ENCODE measurements at regions of chr9 and their contacts with region 1.

Region 1: DNA sequence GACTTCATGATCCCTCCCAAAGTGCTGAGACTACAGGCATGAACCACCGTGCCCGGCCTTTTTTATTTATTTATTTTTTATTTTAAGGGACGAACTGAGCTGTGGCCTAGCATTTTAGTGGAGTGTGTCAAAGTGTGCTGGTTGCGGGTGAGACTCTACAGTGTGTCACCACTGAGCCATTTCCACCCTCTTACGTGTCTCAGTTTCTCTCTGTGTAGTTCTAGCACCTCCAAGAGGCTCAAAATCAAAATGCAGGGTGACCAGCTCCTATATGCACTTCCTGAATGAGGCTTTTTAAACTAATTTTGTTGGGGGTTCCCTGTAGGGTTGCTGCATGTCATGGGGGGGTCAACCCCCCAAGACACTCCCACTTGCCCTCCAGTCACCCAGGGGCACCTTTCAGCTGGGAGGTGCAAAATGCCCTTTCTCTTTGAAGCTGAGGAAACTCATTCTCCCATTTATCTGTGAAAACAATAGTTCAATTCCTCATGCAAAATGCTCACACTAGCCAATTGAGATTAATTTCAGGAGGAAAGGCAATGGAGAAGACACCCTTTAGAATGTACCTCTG is 69.3 kb downstream of the COL15A1 start:
- DNase-seq: peak in 1 of 2 donors; percentile 54
- ATAC-seq: peak; percentile 88 to 97 (median 95)
- H3K4me3 ChIP-seq: no peak overlapping the region
- H3K4me3 Mint-ChIP-seq: peak overlapping the region; percentile 71
- H3K27ac ChIP-seq: peak overlapping the region; percentile 79
- H3K27ac Mint-ChIP-seq: peak overlapping the region; percentile 86 to 94
- H3K4me1 ChIP-seq: peaks cover 7% of the 10 kb centered on the region
- H3K4me1 Mint-ChIP-seq: peaks cover 33 to 36% of the 10 kb centered on the region in 2 donors
- H3K27me3 ChIP-seq: no peaks in the 10 kb centered on the region
- H3K27me3 Mint-ChIP-seq: no peaks in the 10 kb centered on the region
- CTCF ChIP-seq: peak; percentile 49

Region 2: GRCh38 chr9:98806394-98807035 is 206.5 kb before region 1 on chr9:
- intact Hi-C with region 1: no loop called
- DNase-seq: no peak
- ATAC-seq: no peak
- H3K4me3 ChIP-seq: no peak overlapping the region
- H3K4me3 Mint-ChIP-seq: peak overlapping the region; percentile 93
- H3K27ac ChIP-seq: no peak overlapping the region
- H3K27ac Mint-ChIP-seq: peak overlapping the region; percentile 16 to 25
- H3K4me1 ChIP-seq: peaks cover 16% of the 10 kb centered on the region
- H3K4me1 Mint-ChIP-seq: peaks cover 18 to 40% of the 10 kb centered on the region in 2 donors
- H3K27me3 ChIP-seq: no peaks in the 10 kb centered on the region
- H3K27me3 Mint-ChIP-seq: peaks cover 6 to 20% of the 10 kb centered on the region in 2 donors
- CTCF ChIP-seq: no peak

Region 3: DNA sequence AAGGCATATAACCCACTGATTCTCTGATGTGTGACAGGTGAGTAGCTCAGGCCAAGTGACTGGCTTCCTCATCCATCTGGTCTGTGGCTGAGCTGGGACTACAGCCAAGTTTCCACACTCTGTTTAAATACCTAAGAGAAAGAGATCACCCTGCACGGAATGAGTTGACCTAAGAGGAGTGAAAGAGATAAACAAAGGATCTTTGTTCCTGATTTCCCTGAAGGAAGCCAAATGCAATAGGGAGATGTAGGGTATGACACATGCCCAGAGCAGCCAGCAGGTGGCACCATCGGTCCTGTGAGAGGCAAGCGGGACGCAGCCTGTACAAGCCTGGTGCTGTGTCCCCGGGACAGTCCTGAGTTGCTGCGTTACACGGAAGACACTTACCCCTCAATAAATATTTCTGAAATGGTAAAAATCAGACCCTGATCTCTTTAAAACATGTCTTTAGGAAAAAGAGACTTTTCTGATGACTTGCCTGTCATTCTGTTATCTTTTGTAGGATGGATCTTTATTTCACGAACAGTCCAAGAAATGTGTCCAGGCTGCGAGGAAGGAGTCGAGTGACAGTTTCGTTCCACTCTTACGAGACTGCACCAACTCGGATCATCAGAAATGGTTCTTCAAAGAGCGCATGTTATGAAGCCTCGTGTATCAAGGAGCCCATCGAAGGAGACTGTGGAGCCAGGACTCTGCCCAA is 164.4 kb before region 1 on chr9:
- intact Hi-C with region 1: loop called (anchors 2 kb)
- DNase-seq: peak; percentile 61 to 85
- ATAC-seq: peak; percentile 88 to 99 (median 92)
- H3K4me3 ChIP-seq: no peak overlapping the region
- H3K4me3 Mint-ChIP-seq: no peak overlapping the region
- H3K27ac ChIP-seq: no peak overlapping the region
- H3K27ac Mint-ChIP-seq: no peak overlapping the region
- H3K4me1 ChIP-seq: no peaks in the 10 kb centered on the region
- H3K4me1 Mint-ChIP-seq: peaks cover 0 to 9% of the 10 kb centered on the region in 2 donors
- H3K27me3 ChIP-seq: no peaks in the 10 kb centered on the region
- H3K27me3 Mint-ChIP-seq: no peaks in the 10 kb centered on the region
- CTCF ChIP-seq: peak; percentile 92

Region 4: GRCh38 chr9:98974994-98975712 is 37.9 kb before region 1 on chr9:
- intact Hi-C with region 1: loop called (anchors 1 kb)
- DNase-seq: peak; percentile 78 to 86
- ATAC-seq: peak; percentile 90 to 100 (median 99)
- H3K4me3 ChIP-seq: no peak overlapping the region
- H3K4me3 Mint-ChIP-seq: peak overlapping the region; percentile 50
- H3K27ac ChIP-seq: no peak overlapping the region
- H3K27ac Mint-ChIP-seq: no peak overlapping the region
- H3K4me1 ChIP-seq: peaks cover 10% of the 10 kb centered on the region
- H3K4me1 Mint-ChIP-seq: peaks cover 7 to 10% of the 10 kb centered on the region in 2 donors
- H3K27me3 ChIP-seq: peaks cover 7% of the 10 kb centered on the region
- H3K27me3 Mint-ChIP-seq: peaks cover 12 to 16% of the 10 kb centered on the region in 2 donors
- CTCF ChIP-seq: peak; percentile 93

Region 5: GRCh38 chr9:99104459-99105151 is 91.6 kb after region 1 on chr9 and contains the start of gene TGFBR1:
- intact Hi-C with region 1: no loop called
- DNase-seq: peak; percentile 94 to 95
- ATAC-seq: peak; percentile 80 to 93 (median 88)
- H3K4me3 ChIP-seq: peak within 1 kb of the TSS; percentile 70
- H3K4me3 Mint-ChIP-seq: peak within 1 kb of the TSS; percentile 89
- H3K27ac ChIP-seq: peak within 1 kb of the TSS; percentile 77
- H3K27ac Mint-ChIP-seq: peak within 1 kb of the TSS; percentile 91 to 98
- H3K4me1 ChIP-seq: peaks cover 34% of the 10 kb centered on the region
- H3K4me1 Mint-ChIP-seq: peaks cover 84 to 86% of the 10 kb centered on the region in 2 donors
- H3K27me3 ChIP-seq: no peaks in the 10 kb centered on the region
- H3K27me3 Mint-ChIP-seq: no peaks in the 10 kb centered on the region
- CTCF ChIP-seq: no peak
- total RNA-seq, gene TGFBR1: 78.0 to 120 (median 113) TPM

Measured in natural killer cell (primary cell).